Sciatic nerve (tissue), 2 donors: ENCODE measurements at regions of chr1 and their contacts with region 1.

Region 1: DNA sequence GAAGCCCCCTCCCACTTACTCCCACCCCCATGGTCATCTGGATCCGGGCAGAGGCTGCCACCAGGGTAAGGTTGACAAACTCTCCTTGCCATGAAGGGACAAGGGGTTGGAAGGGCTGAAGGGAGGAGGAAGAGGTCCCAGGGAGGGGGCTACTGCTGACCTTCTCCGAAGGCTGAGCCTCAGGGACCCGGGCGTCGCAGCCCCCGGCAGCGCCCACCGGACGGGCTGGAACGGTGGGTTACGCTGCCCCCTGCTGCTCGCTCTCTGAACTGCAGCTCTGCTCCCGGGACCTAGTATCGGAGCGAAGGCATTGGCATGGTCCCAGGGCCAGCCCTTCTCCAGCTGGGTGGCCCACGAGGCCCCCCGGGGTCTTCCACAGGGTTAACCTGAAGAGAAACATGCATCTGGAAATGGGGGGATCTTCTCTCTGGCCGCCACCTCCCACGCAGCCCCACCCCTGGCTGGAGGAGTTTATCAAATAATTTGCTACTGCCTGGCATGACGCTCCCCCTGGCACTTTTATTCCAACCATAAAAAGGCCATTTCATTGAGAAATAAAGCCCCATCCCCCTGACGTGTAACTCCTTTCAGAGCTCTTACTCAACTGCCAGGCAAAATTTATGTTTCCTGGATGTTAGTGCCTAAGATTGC is 70.4 kb upstream of the TARDBP start:
- DNase-seq: peak; percentile 77
- ATAC-seq: peak; percentile 32

Region 2: DNA sequence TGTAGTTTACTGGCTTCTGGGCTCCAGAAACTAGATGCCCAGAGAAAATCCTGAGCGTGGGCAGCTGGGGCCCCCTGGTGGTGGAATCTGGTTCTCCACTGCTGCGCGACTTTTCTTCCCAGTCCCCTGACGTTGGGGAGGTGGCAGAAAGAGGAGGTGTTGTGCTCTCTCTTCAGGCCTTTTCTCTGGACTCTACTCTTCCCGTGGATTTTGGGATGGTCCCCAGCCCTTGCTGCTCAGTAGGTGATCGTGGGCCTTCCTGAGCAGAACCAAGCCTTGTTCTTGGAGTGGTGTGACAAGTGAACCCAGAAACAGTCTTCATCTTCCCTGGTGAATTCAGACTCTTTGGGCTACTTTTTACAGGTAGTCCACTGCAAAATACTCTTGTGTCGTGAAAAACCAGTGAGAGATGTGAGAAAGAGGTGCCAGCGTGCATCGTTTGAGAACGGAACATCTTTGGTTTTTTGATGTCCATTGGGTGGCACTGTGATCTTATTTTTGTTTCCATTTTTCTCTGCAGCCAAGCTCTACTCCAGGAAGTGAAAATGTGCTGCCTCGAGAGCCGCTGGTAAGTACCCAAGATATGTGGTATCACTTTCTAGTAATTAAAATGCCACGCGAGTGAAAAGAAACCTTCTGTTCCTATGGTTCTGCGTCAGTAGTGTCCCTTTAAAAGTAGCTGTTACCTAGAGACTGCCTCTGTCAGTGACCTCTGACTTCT is 447.1 kb before region 1 on chr1:
- intact Hi-C with region 1: loop called (anchors 10 kb)
- DNase-seq: peak; percentile 87
- ATAC-seq: peak; percentile 90

Region 3: GRCh38 chr1:11053758-11054137 is 111.7 kb after region 1 on chr1:
- intact Hi-C with region 1: no loop called
- DNase-seq: no peak
- ATAC-seq: peak; percentile 71